ENCODE measurements at regions of chr15 and their contacts with region 1.

Region 1: DNA sequence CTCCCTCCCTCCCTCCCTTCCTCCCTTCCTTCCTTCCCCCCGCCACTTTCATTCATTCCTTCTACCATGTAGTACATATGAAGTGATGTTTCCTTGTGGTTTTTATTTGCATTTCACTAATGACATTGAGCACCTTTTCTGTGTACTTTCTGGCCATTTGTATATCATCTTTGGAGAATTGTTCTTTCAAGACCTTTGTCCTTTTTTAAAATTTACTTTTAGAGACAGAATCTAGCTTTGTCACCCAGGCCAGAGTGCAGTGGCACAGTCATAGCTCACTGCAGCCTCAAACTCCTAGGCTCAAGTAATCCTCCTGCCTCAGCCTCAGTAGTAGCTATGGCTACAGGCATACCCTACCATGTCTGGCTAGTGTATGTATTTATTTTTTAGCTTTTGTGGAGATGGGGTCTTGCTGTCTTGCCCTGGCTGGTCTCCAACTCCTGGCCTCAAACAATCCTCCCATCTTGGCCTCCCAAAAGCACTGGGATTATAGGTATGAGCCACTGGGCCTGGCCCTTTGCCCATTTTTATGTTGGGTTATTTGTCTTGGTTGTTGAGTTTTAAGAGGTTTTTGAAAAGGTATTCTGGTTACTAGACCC is 42.0 kb upstream of the CTDSPL2 start:
- DNase-seq: no peak
- H3K4me3 ChIP-seq: no peak overlapping the region
- H3K27ac ChIP-seq: peak overlapping the region; percentile 55
- H3K27me3 ChIP-seq: no peaks in the 10 kb centered on the region
- CTCF ChIP-seq: no peak

Region 2: DNA sequence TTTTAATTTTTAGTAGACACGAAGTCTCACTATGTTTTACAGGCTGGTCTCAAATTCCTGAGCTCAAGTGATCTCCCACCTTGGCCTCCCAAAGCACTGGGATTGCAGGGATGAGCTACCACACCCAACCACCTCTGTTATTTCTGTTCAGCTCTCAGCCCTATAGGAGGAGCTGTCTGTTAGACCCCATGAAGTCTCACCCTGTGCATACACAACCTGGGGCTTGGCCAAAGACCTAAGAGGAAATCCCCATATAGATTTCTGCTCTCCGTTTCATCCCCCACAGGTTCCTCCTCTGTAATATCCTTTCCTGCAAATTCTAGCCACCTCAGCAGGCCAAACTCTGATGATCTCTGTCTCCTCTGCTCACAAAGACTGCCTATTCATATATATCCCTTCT is 14.6 kb before region 1 on chr15:
- CTCF ChIA-PET with region 1: interaction called, 3 read pairs
- POLR2A ChIA-PET with region 1: interaction called, 11 read pairs
- DNase-seq: no peak
- H3K4me3 ChIP-seq: no peak overlapping the region
- H3K27ac ChIP-seq: no peak overlapping the region
- H3K27me3 ChIP-seq: no peaks in the 10 kb centered on the region
- CTCF ChIP-seq: peak; percentile 19

Measured in AG04450 (cell line).